ENCODE measurements at regions of chr4 and their contacts with region 1.

Region 1: GRCh38 chr4:108834835-108835384 is 72.1 kb upstream of the ETNPPL start:
- DNase-seq: peak in 1 of 2 experiments; percentile 75
- H3K4me3 ChIP-seq: no peak overlapping the region
- H3K4me1 ChIP-seq: peaks cover 3% of the 10 kb centered on the region
- H3K27me3 ChIP-seq: no peaks in the 10 kb centered on the region

Region 2: GRCh38 chr4:109302361-109303139 is 467.6 kb after region 1 on chr4 and contains the start of gene COL25A1:
- in situ Hi-C with region 1: loop called (anchors 25 kb)
- DNase-seq: peak; percentile 94 to 97
- H3K4me3 ChIP-seq: peak within 1 kb of the TSS; percentile 55
- H3K4me1 ChIP-seq: peaks cover 10% of the 10 kb centered on the region
- H3K27me3 ChIP-seq: no peaks in the 10 kb centered on the region

Region 3: DNA sequence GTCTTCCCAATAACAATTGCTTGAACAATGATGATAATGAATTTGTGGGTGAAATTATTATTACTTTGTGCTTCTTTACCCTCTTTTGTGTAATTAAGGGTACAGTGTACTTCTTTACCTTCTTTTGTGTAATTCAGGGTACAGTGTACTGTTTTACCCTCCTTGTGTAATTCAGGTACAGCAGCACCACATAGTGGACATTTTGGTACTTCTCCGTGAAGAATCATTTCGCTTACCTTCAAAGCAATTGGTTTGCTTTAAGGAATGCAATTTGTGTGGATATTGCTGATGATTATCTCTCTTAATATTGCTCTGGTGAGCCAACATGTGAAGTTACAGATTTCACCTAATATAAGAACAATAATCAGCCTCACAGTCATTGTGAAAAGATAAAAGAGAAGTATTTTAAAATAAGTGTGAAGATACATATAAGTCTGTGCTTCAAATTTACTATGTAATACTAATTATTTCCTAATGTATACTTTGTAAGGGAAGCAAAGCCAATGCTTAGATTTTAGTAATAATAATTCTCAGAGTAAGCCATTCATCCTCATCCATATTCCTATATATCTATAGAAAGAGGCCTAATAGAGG is 571.5 kb after region 1 on chr4:
- in situ Hi-C with region 1: loop called (anchors 10 kb)
- DNase-seq: peak; percentile 63 to 66
- H3K4me3 ChIP-seq: no peak overlapping the region
- H3K4me1 ChIP-seq: no peaks in the 10 kb centered on the region
- H3K27me3 ChIP-seq: no peaks in the 10 kb centered on the region

Measured in HAP-1 (cell line).